GM23248 (cell line): ENCODE measurements at regions of chr11 and their contacts with region 1.

Region 1: GRCh38 chr11:102933627-102934026 is 21.9 kb downstream of the MMP13 start:
- DNase-seq: no peak
- H3K4me3 ChIP-seq: no peak overlapping the region
- H3K27ac ChIP-seq: no peak overlapping the region
- H3K4me1 ChIP-seq: peaks cover 3% of the 10 kb centered on the region; the same call in 1 of the 2 replicates
- H3K27me3 ChIP-seq: no peaks in the 10 kb centered on the region

Region 2: DNA sequence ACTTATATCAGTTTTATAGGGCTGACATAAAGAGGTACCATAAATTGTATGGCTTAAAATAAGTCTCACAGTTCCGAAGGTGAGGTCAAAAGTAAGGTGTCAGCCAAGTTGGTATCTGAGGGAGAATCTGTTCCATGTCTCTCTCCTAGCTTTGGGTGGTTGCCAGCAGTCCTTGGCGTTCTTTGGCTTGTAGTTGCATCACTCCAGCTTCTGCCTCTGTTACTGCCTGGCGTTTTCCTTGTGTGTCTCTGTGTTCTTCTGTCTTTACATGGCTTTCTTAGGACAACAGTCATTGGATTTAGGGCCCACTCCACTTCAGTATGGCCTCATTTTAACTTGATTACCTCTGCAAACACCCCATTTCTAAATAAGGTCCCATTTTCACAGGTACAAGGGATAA is 419.8 kb before region 1 on chr11:
- in situ Hi-C with region 1: no loop called
- DNase-seq: peak; percentile 49
- H3K4me3 ChIP-seq: no peak overlapping the region
- H3K27ac ChIP-seq: no peak overlapping the region
- H3K4me1 ChIP-seq: no peaks in the 10 kb centered on the region
- H3K27me3 ChIP-seq: no peaks in the 10 kb centered on the region

Region 3: GRCh38 chr11:102733232-102733875 is 200.3 kb before region 1 on chr11:
- in situ Hi-C with region 1: loop called (anchors 10 kb)
- DNase-seq: peak; percentile 65
- H3K4me3 ChIP-seq: no peak overlapping the region
- H3K27ac ChIP-seq: no peak overlapping the region
- H3K4me1 ChIP-seq: peaks cover 9% of the 10 kb centered on the region
- H3K27me3 ChIP-seq: no peaks in the 10 kb centered on the region

Region 4: DNA sequence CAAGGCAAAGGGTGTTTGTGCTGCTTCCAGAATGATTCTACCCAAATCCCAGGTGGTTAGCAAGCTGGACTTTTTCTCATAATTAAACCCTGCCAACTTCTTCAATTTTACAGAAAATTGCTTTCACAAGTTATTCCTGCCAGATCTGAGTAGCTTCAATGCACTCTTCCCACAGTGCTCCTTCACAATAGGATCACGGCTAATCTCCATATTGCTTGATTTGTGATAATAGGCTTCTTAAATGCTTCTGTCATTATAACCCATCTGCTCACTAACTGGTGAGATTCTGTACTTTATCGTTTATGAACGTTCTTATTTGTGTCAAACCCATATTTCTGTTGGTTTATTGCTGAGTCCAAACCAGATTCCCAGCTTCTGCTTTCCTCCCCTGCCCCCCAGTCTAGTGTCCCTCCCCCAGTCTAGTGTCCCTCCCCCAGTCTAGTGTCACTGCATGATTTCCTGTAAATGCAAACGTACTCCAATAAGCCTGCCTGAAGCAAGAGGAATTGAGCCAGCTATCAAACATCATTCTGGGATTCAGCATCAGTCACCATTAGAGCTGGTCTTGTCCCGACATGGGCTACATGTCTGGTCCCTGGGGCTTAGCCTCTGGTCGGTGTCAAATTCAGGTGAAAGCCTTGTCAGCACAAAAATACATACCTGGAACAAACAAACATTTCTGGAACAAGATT is 104.2 kb before region 1 on chr11:
- in situ Hi-C with region 1: loop called (anchors 10 kb)
- DNase-seq: no peak
- H3K4me3 ChIP-seq: no peak overlapping the region
- H3K27ac ChIP-seq: no peak overlapping the region
- H3K4me1 ChIP-seq: peaks cover 14% of the 10 kb centered on the region
- H3K27me3 ChIP-seq: no peaks in the 10 kb centered on the region

Region 5: GRCh38 chr11:103413266-103413888 is 479.8 kb after region 1 on chr11:
- in situ Hi-C with region 1: no loop called
- DNase-seq: no peak
- H3K4me3 ChIP-seq: no peak overlapping the region
- H3K27ac ChIP-seq: no peak overlapping the region
- H3K4me1 ChIP-seq: no peaks in the 10 kb centered on the region
- H3K27me3 ChIP-seq: no peaks in the 10 kb centered on the region